Psoas muscle (tissue), 8 donors: ENCODE measurements at regions of chr11 and their contacts with region 1.

Region 1: DNA sequence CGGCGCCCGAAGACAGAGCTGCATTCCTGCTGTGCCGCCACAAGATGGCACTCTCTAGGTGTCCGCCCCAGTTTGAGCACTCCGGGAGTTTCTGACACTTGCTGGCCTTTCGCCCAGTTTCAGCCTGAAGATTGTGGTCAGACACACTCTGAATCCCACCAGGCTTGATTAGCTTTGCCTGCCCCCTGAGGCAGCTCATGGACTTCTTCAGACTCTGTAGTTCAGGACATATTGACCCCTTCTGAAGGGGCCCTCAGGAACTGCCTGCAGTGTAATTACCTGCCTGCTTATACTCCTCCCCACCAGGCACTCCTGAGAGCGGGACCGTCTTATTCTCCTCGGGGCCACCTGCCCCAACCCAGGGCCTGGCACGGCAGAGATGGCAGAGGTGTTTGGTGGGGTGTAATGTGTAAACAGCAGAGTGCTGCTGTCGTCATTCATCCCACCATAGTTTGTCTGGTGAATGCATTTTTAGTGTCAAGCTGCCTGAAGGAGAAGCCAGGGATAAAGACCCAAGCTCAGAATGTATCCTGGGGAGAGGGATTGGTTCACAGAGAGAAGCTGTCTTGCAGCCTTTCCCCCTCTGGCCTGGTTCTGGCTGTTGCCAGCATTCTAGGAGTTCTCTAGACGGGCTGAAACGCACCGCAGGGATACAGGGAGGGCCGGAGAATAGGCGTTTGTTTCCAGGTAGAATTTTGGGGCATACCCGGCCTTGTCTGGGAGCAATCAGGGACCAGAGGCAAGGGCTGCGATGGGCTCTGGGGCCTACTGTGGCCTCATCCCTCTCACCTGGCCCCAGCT is 46.4 kb downstream of the EIF3F start:
- DNase-seq: peak; percentile 81 to 89
- ATAC-seq: peak; percentile 88 to 96 (median 90)
- H3K4me3 ChIP-seq: no peak overlapping the region
- H3K27ac ChIP-seq: no peak overlapping the region
- H3K4me1 ChIP-seq: no peaks in the 10 kb centered on the region
- H3K27me3 ChIP-seq: peaks cover 0 to 2% (median 0%) of the 10 kb centered on the region in 3 donors
- CTCF ChIP-seq: peak; percentile 84

Region 2: GRCh38 chr11:8006349-8006977 is 27.0 kb before region 1 on chr11:
- intact Hi-C with region 1: loop called in 1 of 2 experiments (anchors 2 kb)
- DNase-seq: peak in 1 of 2 donors; percentile 15
- ATAC-seq: peak; percentile 85 to 94 (median 88)
- H3K4me3 ChIP-seq: no peak overlapping the region
- H3K27ac ChIP-seq: no peak overlapping the region
- H3K4me1 ChIP-seq: no peaks in the 10 kb centered on the region
- H3K27me3 ChIP-seq: no peaks in the 10 kb centered on the region
- CTCF ChIP-seq: peak; percentile 84

Region 3: GRCh38 chr11:8070417-8071115 is 37.1 kb after region 1 on chr11:
- intact Hi-C with region 1: loop called (anchors 2 to 5 kb)
- DNase-seq: no peak
- ATAC-seq: peak in 2 of 4 donors; percentile 54 to 72
- H3K4me3 ChIP-seq: no peak overlapping the region
- H3K27ac ChIP-seq: no peak overlapping the region
- H3K4me1 ChIP-seq: peaks cover 4% of the 10 kb centered on the region
- H3K27me3 ChIP-seq: no peaks in the 10 kb centered on the region
- CTCF ChIP-seq: peak; percentile 26

Region 4: DNA sequence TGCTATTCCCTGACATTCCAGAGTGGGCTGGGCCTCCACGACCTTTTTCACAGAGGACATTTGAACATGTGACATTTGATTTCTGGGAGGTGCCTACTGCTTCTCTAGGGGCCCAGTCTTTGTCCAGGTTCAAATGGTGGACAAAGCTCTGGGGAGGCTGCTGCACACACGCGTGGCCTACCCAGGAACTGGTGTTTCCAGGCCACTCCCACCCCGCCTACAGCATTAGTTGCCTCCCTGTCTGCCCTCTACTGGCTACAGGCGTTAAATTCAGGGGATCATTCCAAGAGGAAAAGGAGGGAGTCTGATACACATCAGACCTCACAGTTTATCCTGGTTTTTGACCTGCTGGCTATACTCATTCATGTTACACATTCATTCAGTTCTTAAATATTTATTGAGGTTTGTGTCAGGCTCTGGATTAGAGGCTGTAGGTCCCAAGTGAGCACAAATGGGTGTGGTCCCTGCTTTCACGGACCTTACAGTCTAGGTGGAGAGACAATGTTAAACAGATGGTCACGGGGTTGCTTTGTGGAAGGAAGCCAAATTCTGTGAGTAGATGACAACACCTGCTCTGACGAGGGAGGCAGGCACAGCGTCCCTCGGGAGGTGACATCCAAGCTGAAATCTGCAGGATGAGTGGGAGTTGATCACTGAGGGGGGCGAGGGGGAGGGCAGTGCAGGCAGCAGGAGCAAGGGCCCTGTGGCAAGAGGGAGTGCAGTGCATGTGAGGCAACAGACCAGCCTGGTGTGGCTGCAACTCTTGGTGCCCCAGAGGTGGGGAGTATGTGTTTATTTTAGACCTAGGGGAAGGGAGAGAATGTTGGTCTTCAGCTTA is 59.3 kb after region 1 on chr11:
- intact Hi-C with region 1: loop called in 1 of 2 experiments (anchors 5 kb)
- DNase-seq: peak; percentile 56 to 69
- ATAC-seq: peak; percentile 61 to 75 (median 65)
- H3K4me3 ChIP-seq: no peak overlapping the region
- H3K27ac ChIP-seq: no peak overlapping the region
- H3K4me1 ChIP-seq: no peaks in the 10 kb centered on the region
- H3K27me3 ChIP-seq: no peaks in the 10 kb centered on the region
- CTCF ChIP-seq: peak; percentile 51

Region 5: DNA sequence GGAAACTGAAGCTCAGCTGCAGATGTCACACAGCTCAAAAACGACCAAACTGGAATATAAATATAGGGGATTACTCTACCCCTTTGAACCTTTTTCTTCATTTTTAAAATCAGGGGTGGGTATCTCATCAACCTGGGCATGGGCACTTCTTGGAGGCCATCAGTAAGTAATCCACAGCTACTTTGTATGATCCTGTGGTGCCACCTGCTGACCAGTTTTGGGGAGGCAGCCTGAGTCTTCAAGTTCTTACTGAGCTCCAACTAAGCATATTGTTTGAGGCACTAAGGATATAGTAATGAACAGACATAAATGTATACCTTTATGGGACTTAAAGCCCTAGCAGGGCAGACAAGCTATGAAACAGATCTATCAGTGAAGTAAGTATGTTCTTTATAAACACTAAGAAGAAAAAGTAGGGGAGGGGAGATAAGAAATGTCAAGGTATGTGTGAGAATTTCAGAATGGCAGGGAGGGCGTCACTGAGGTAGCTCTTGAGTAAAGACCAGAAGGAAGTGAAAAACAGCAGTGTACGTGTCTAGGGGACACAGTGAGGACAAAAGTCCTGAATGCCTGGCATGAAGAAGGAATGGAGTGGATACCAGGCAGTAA is 65.9 kb after region 1 on chr11:
- intact Hi-C with region 1: loop called (anchors 1 to 2 kb)
- DNase-seq: peak; percentile 77 to 85
- ATAC-seq: peak; percentile 73 to 91 (median 76)
- H3K4me3 ChIP-seq: no peak overlapping the region
- H3K27ac ChIP-seq: no peak overlapping the region
- H3K4me1 ChIP-seq: no peaks in the 10 kb centered on the region
- H3K27me3 ChIP-seq: no peaks in the 10 kb centered on the region
- CTCF ChIP-seq: peak; percentile 83